Posterior vena cava (tissue), 2 donors: ENCODE measurements at regions of chr22 and their contacts with region 1.

Region 1: DNA sequence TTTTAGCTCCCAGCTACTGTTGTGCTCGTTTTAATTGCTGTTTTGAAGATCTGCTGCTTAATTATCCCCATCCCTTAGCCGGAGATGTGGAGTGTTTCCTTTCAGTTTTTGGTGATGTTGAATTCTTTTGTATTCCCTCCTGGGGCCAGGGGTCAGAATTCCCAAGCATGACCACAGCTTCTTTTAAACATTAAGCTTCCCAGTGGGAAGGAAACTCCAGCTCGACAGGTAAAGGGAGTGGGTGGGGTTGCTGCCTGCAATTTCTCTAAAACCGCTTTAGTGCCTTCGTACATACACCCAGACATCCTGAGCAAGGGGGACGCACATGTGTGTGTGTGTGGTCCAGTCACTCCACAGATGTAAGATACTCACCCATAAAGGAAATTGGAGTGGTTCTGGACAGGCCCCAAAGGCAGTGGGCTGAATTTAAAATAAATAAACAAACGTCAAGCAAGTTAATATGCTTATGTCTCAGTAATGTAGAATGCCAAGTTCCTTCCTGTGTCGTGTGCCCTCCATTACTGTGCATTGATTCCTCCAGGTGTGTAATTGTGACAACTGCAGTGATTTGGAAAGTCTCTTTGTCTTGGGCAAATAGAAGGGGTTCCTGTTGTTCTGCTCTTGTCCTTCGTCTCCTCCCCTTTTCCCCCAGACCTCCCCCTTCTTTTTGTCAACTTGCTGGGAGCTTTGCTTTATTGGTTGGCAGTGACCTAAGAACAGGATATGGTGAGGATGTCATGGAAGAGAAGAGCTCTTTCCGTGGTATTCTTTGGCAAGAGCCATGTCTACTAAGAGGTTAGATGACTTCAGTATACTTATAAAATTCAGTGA is 19.2 kb upstream of the ADSL start:
- DNase-seq: no peak

Region 2: GRCh38 chr22:40055143-40055883 is 271.8 kb before region 1 on chr22:
- intact Hi-C with region 1: loop called in 1 of 2 experiments (anchors 10 kb)
- DNase-seq: no peak

Region 3: GRCh38 chr22:40193429-40194421 is 133.4 kb before region 1 on chr22:
- intact Hi-C with region 1: no loop called
- DNase-seq: no peak